ENCODE measurements at regions of chr10 and their contacts with region 1.

Region 1: DNA sequence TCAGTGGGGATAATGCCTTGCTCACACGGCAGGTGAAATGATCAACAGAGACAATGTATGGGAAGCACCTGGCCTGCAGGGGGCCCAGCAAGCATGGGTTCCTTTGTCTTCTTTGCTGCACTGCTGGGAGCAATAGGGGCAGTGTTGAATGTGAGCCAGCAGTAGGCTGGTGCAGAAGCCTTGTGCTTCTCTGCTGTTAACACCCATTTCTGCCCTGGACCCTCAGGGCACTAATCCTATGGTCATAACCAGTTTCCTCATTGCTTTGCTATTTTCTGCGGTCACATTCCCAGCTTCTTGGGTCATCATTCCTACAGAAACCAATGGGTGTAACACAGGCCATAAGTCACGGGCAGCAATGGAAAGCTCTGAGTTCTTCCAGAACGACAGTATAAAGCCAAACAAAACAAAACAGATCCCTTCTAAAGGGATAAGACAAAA is 10.9 kb upstream of the LGI1 start:
- H3K4me3 Mint-ChIP-seq: peak overlapping the region; percentile 48
- H3K27ac Mint-ChIP-seq: peak overlapping the region; percentile 30
- H3K4me1 Mint-ChIP-seq: peaks cover 52% of the 10 kb centered on the region
- H3K27me3 Mint-ChIP-seq: peaks cover 6% of the 10 kb centered on the region

Region 2: DNA sequence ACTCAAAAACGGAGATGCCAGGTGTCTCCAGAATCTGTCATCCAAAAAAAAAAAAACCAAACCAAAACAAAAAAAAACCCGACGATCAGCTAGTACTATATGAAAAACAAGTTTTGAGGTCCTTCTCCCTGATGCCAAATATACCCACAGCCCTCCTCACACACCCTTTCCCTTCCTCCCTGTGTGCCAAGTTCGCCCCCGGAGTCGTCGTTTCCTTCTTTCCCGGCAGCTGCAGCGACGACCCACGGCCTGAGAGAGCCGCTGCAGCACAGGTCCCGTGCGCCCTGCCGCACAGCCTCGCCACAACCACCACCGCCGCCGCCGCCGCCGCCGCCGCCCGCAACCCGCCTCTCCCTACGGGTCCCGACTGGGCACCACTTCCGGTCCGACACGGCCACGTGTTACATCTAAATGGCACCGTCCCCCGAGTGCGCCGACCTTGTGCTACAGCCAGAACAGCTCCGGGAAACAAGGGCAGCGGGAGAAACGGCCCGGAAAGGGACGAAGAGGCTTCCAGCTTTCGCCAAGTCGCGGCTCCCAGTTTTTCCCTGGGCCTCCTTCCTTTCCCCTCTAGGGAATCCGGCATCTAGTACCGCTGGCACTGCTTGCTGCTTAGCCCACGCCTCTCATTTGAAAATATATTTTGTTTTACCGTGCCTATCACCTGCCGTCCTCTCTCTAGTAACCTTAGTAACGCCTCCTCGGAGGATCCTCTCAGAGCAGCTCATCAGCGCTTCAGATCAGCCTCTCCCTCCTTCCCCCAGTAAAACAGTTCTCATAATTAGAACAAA is 44.5 kb before region 1 on chr10 and contains the start of gene FRA10AC1:
- intact Hi-C with region 1: loop called (anchors 2 kb)
- H3K4me3 Mint-ChIP-seq: no peak within 1 kb of the TSS
- H3K27ac Mint-ChIP-seq: no peak within 1 kb of the TSS
- H3K4me1 Mint-ChIP-seq: peaks cover 5% of the 10 kb centered on the region
- H3K27me3 Mint-ChIP-seq: peaks cover 3% of the 10 kb centered on the region

Region 3: DNA sequence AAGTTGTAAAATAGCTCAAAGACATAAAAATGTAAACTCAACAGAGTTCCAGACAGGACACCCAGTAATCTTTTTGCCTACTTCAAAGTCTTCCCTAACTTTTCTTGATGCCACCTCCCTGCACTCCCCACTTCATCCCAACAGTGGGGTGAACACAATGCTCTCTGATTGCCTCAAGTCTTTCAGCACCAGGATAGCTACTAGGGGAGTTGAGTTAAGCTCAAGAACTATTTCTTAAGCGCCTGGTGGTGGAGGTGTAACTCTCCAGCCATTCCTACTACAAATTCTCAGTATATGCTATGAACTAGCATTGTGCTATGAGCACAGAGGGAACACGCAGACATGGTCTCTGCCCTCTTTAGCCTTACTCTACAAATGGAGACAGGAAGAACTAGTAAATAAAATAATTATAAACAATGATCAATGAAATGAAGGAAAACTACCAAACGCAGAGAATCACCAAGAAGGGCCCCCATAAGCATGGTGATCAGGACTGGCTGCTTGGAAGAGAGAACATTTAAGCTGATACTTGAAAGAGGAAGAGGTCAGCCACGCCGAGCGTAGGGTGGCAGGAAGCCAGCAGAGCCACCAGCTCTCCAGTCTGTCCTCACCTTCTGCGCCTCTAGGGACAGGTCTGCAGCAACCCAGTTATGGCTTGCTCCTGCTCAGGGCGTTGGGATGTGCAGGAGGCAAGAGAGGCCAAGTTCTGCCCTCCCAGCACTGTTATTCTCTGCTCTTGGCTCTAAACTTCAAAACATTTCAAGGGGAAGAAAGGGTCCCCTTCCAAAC is 27.7 kb before region 1 on chr10:
- intact Hi-C with region 1: no loop called
- H3K4me3 Mint-ChIP-seq: no peak overlapping the region
- H3K27ac Mint-ChIP-seq: no peak overlapping the region
- H3K4me1 Mint-ChIP-seq: peaks cover 42% of the 10 kb centered on the region
- H3K27me3 Mint-ChIP-seq: peaks cover 16% of the 10 kb centered on the region